ENCODE measurements at regions of chr9 and their contacts with region 1.

Region 1: DNA sequence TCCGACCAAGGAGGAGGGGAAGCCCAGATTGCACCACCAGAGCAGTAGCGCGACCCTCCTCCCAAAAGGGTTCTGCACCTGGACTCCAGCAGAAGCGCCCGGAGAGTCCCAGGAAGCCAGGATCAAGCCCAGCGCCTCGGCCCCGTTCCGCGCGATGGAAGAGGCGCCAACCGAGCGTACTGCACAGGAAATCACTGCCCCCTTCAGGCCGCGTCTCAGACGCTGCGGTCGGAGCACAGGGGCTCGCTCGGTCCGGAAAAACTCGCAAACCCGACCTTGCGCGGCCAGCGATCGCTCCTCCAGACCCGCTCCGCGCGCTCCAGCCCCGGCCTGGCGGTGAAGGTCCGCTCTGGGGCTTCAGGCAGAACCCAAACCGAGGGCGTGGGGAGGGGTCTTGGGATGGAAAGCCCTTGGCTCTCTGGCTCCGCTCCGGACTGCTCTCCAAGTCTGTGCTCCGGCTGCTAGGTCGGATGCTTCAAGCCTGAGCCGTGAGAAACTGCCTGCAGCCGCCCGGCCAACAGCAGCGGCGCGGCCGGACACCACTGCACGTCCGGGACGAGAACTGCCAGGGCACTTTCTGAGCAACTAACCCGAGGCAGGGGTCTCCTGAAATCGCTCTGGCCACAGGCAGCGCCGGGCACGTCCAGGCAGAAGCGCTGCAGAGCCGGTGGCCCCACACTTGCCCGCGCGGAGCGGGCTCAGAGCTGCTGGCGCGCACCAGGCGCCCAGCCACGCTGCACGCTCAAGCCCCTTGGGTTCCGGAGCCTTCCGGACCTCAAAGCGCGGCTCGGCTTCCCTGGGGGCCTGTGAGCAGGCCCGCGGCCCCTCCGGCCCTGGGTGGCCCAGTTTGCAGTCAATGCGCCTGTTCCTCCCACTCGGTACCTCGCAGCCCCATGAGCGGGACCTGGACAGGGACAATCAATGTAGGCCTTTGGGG is 1.3 kb downstream of the GABBR2 start:
- DNase-seq: peak; percentile 61
- ATAC-seq: peak; percentile 85
- H3K4me3 ChIP-seq: peak overlapping the region; percentile 60
- H3K27ac ChIP-seq: no peak overlapping the region
- H3K4me1 ChIP-seq: no peaks in the 10 kb centered on the region
- H3K27me3 ChIP-seq: peaks cover 30% of the 10 kb centered on the region
- CTCF ChIP-seq: peak; percentile 58

Region 2: DNA sequence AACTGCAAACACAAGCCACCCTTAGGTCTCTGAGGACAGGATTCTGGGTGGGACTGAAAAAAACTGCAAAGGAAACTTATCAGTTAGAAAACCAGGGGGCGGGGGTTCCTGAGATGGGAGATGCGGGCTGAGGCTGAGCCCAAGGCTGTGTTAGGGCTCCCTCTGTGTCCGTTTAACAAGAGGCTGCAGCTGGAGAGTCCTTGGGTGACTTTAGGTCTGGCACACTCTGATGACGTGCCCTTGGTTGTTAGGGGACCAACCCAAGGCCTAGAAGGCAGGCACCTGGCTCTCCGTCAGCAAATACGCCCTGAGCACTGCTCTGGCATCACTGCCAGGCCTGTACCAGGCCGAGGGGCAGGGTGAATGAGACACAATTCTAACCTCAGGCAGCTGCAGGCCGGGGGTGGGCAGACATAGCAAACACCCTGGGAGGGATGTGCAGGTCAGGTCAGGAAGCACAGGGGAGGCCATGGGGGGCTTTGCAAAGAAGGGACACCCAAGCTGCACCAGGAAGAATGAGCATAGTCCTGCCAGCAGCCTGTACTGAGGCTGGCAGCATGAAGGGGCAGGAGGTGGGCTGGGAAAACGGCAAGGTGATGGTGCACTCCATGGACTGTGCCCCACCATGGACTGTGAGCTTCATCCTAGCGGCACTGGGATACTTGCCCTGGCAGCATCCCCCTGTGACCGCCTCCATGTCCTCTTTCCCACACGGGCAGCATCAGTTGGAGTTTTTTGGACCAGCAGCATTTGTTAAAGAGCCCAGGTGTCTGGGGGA is 136.6 kb before region 1 on chr9:
- CTCF ChIA-PET with region 1: no interaction called
- POLR2A ChIA-PET with region 1: no interaction called
- intact Hi-C with region 1: no loop called
- DNase-seq: no peak
- ATAC-seq: no peak
- H3K4me3 ChIP-seq: no peak overlapping the region
- H3K27ac ChIP-seq: no peak overlapping the region
- H3K4me1 ChIP-seq: peaks cover 8% of the 10 kb centered on the region
- H3K27me3 ChIP-seq: no peaks in the 10 kb centered on the region
- CTCF ChIP-seq: no peak

Region 3: GRCh38 chr9:98658951-98659351 is 48.5 kb before region 1 on chr9:
- CTCF ChIA-PET with region 1: no interaction called
- POLR2A ChIA-PET with region 1: no interaction called
- intact Hi-C with region 1: loop called (anchors 5 kb)
- DNase-seq: peak; percentile 6
- ATAC-seq: peak; percentile 37
- H3K4me3 ChIP-seq: no peak overlapping the region
- H3K27ac ChIP-seq: no peak overlapping the region
- H3K4me1 ChIP-seq: peaks cover 12% of the 10 kb centered on the region
- H3K27me3 ChIP-seq: no peaks in the 10 kb centered on the region
- CTCF ChIP-seq: no peak

Region 4: DNA sequence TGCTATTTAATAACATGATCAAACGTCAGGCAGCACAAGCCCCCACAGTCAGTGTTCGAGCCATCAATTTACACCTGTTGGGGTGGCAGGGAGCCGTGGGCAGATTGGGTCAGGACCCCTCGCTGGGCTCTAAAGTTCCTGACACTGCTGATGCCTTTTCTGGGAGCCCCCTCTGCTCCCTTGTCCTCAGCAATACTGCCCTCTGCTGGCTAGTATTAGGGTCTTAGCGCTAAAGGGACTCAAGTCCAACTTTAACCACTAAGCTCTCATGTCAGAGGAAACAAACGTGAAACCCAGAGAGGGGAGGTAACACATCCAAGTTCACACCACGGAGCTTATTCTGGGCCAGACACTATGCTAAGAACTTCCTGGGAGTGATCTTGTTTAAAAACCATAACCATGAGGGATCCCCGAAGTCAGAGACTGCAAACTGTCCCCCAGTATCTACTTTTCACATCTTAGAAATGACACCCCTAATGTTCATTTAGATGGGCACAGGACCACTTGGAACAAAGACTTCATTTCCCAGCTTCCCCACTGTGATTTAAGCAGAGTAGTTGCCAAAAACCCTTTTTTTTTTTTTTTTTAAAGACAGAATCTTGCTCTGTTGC is 68.5 kb after region 1 on chr9:
- CTCF ChIA-PET with region 1: no interaction called
- POLR2A ChIA-PET with region 1: no interaction called
- intact Hi-C with region 1: no loop called
- DNase-seq: peak; percentile 64
- ATAC-seq: peak; percentile 36
- H3K4me3 ChIP-seq: no peak overlapping the region
- H3K27ac ChIP-seq: no peak overlapping the region
- H3K4me1 ChIP-seq: peaks cover 28% of the 10 kb centered on the region
- H3K27me3 ChIP-seq: no peaks in the 10 kb centered on the region
- CTCF ChIP-seq: peak; percentile 80

Measured in PC-3 (cell line).